Heart right ventricle (tissue), 16 donors: ENCODE measurements at regions of chr19 and their contacts with region 1.

Region 1: DNA sequence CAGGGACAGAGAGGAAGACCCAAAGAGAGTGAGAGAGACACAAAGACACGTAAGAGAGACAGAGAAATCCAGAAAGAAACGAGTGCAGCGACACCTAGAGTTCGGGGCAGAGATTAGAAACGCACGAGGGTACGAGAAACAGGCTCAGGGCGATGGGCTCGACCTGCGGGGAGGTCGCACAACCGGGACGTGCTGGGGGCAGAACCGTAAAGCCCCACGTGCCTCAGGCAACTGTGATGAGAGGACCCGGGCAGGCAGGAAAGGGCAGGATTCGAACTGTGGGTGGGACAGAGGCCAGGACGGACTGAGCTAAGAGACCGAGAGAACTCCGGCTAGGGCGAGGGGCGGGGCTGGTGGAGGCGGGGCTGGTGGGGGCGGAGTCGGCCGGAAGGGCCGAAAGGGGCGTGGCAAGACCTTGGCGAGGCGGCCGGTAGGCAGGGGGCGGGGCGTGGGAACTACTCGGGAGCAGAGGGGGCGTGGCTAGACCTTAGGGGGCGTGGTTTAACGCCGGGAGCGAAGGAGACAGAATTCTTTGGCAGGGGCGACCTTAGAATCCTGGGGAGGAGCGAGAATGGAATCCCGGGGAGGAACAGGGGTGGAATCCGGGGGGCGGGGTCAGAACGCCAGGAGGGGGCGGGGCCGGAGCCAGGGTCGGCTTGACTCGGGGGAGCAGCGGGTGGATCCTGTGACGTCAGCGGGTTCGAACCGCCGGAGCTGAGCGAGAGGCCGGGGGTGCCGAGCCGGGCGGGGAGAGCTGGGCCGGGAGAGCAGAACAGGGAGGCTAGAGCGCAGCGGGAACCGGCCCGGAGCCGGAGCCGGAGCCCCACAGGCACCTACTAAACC is at the start of gene NECTIN2:
- DNase-seq: peak; percentile 100
- ATAC-seq: peak; percentile 79 to 90 (median 86)
- H3K4me3 ChIP-seq: peak within 1 kb of the TSS; percentile 77 to 100 (median 98)
- H3K27ac ChIP-seq: peak within 1 kb of the TSS; percentile 87 to 100 (median 99)
- H3K4me1 ChIP-seq: peaks cover 10 to 54% (median 42%) of the 10 kb centered on the region in 9 donors
- H3K27me3 ChIP-seq: peaks cover 0 to 13% (median 0%) of the 10 kb centered on the region in 7 donors
- CTCF ChIP-seq: peak; percentile 34 to 85 (median 66)
- total RNA-seq, gene NECTIN2: 34.1 to 83.9 (median 46.5) TPM

Region 2: GRCh38 chr19:44689056-44689895 is 156.6 kb before region 1 on chr19:
- intact Hi-C with region 1: loop called in 4 of 10 experiments (anchors 5 to 10 kb)
- DNase-seq: peak; percentile 76 to 83
- ATAC-seq: peak; percentile 36 to 72 (median 53)
- H3K4me3 ChIP-seq: no peak overlapping the region
- H3K27ac ChIP-seq: peak overlapping the region in 1 of 10 donors; percentile 3
- H3K4me1 ChIP-seq: peaks cover 0 to 74% (median 35%) of the 10 kb centered on the region in 9 donors
- H3K27me3 ChIP-seq: no peaks in the 10 kb centered on the region
- CTCF ChIP-seq: peak; percentile 88 to 97 (median 94)

Region 3: GRCh38 chr19:44723952-44724319 is 121.9 kb before region 1 on chr19:
- intact Hi-C with region 1: loop called in 2 of 10 experiments (anchors 10 kb)
- DNase-seq: peak; percentile 83 to 84
- ATAC-seq: peak; percentile 89 to 94 (median 90)
- H3K4me3 ChIP-seq: no peak overlapping the region
- H3K27ac ChIP-seq: peak overlapping the region in 9 of 10 donors; percentile 0 to 60 (median 28)
- H3K4me1 ChIP-seq: peaks cover 12 to 65% (median 48%) of the 10 kb centered on the region in 9 donors
- H3K27me3 ChIP-seq: no peaks in the 10 kb centered on the region
- CTCF ChIP-seq: peak; percentile 94 to 100 (median 99)

Region 4: GRCh38 chr19:44746946-44747738 is 98.7 kb before region 1 on chr19:
- intact Hi-C with region 1: no loop called
- DNase-seq: peak; percentile 96
- ATAC-seq: peak; percentile 90 to 96 (median 94)
- H3K4me3 ChIP-seq: peak overlapping the region; percentile 58 to 97 (median 81)
- H3K27ac ChIP-seq: peak overlapping the region; percentile 93 to 100 (median 97)
- H3K4me1 ChIP-seq: peaks cover 20 to 86% (median 74%) of the 10 kb centered on the region in 9 donors
- H3K27me3 ChIP-seq: no peaks in the 10 kb centered on the region
- CTCF ChIP-seq: no peak

Region 5: DNA sequence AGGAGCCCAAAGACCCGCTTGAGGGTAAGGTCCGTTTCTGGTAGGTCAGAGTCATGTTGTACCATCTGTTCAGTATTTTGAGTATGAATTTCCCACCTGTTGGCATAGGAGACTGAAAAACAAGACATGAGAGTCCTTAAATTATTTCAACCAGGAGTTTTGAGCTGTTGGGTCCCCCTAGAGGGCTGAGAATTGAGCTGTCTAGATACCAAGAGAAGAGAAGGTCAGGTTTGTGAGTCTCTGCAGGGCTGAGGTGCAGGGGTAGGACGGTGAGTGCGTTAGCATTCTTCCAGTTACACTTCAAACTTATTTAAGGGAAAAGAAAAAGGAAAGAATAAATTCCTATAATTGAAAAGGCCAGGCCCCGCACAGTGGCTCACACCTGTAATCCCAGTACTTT is 63.1 kb before region 1 on chr19:
- intact Hi-C with region 1: loop called in 9 of 10 experiments (anchors 1 to 5 kb)
- DNase-seq: no peak
- ATAC-seq: no peak
- H3K4me3 ChIP-seq: no peak overlapping the region
- H3K27ac ChIP-seq: no peak overlapping the region
- H3K4me1 ChIP-seq: peaks cover 0 to 11% (median 3%) of the 10 kb centered on the region in 9 donors
- H3K27me3 ChIP-seq: peaks cover 0 to 5% (median 4%) of the 10 kb centered on the region in 7 donors
- CTCF ChIP-seq: no peak

Region 6: DNA sequence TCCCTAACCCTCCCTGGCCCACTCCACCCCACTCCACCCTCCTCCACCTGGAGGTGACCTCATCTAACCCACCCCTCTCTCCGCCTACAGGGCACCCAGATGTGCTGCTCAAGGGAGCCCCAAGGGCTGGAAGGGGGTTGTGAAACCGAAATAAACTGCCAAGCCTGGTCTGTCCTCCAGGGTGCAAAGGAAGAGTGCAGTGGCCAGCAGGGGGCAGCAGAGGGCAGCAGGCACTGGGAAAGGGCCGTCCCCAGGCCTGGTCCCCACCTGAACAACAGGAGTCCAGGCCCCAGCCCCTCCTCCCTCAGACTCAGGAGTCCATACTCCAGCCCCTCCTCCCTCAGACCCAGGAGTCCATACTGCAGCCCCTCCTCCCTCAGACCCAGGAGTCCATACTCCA is 45.4 kb before region 1 on chr19:
- intact Hi-C with region 1: loop called (anchors 1 to 5 kb)
- DNase-seq: peak; percentile 87 to 90
- ATAC-seq: peak; percentile 89 to 94 (median 91)
- H3K4me3 ChIP-seq: no peak overlapping the region
- H3K27ac ChIP-seq: no peak overlapping the region
- H3K4me1 ChIP-seq: peaks cover 0 to 27% (median 17%) of the 10 kb centered on the region in 9 donors
- H3K27me3 ChIP-seq: no peaks in the 10 kb centered on the region
- CTCF ChIP-seq: peak; percentile 88 to 95 (median 91)

Region 7: GRCh38 chr19:44820648-44821609 is 24.9 kb before region 1 on chr19:
- intact Hi-C with region 1: loop called in 1 of 10 experiments (anchors 1 kb)
- DNase-seq: peak; percentile 80 to 88
- ATAC-seq: peak; percentile 75 to 93 (median 88)
- H3K4me3 ChIP-seq: peak overlapping the region in 7 of 10 donors; percentile 9 to 40 (median 35)
- H3K27ac ChIP-seq: peak overlapping the region; percentile 50 to 92 (median 84)
- H3K4me1 ChIP-seq: peaks cover 0 to 39% (median 22%) of the 10 kb centered on the region in 9 donors
- H3K27me3 ChIP-seq: no peaks in the 10 kb centered on the region
- CTCF ChIP-seq: no peak

Region 8: DNA sequence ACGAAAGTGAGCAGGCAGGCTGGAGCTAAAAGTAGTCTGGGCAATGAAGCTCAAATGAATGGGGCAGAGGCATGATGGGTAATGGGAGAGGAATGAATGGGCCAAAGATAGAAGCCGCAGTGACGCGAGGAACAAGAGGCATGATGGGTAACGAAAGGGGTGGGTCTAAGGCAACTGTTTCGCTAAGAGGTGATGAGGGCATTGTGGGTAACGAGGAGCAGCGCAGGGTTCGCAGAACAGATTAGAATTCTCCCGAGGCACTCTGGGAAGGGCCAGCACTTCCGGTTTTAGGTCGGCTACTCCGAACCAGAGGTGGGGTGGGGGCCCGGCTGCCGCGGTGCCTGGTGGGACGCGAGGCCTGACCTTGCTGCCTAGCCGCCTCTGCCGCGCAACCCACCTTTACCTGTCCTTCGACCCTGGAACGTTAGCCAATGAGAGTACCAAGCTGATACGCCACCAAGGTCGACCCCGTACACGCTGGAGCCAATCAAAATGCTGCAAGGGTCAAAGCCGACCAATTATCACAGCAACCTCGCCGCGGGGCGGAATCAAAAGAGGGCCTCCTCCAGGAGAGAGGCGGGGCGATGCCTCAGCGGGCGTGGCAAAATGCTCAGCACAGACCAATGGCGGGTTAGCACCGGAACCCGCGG is 44.7 kb after region 1 on chr19:
- intact Hi-C with region 1: loop called in 5 of 10 experiments (anchors 2 to 5 kb)
- DNase-seq: peak; percentile 100
- ATAC-seq: peak; percentile 88 to 96 (median 94)
- H3K4me3 ChIP-seq: peak overlapping the region; percentile 16 to 87 (median 58)
- H3K27ac ChIP-seq: peak overlapping the region; percentile 81 to 98 (median 92)
- H3K4me1 ChIP-seq: peaks cover 13 to 28% (median 25%) of the 10 kb centered on the region in 9 donors
- H3K27me3 ChIP-seq: no peaks in the 10 kb centered on the region
- CTCF ChIP-seq: no peak